Sigmoid colon (tissue), 7 donors: ENCODE measurements at regions of chr10 and their contacts with region 1.

Region 1: DNA sequence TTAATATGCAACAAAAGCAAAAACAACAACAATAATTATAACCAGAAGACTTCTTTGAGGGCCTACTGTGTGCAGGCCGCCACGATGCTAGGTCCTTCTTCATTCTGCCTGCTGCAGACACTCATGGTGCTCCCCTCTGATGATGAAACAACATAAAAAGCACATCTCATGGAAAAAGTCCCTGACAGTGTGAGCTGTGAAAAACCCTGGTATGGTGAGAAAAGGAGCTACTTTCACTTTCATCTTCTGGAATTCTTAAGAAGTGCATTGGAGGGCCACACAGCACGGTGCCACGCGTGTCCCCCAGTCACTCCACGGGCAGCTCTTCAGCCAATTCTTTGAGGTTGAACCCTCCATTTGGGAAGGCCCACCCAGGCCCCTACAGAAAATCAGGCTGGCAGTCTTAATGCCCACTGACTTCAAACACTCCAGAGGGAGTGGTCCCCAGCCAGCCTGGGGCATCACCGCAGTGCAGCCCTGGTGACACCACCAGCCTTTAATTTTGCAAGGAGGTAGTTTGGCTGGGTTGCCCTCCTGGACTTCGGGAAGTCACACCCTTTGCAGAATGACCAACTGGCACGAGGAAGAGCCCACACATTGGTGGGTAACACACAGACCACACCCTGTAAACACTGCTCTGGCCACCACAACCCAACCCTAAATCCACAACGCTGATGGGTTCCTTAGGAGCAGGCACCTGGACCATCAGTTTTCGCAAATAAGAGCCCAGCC is 7.7 kb downstream of the KCNMA1 start:
- DNase-seq: no peak
- H3K4me3 ChIP-seq: no peak overlapping the region
- H3K27ac ChIP-seq: peak overlapping the region; percentile 53 to 93 (median 88)
- H3K4me1 ChIP-seq: peaks cover 0 to 98% (median 87%) of the 10 kb centered on the region in 4 donors
- H3K27me3 ChIP-seq: no peaks in the 10 kb centered on the region
- CTCF ChIP-seq: no peak
- EP300 ChIP-seq: no peak
- POLR2A ChIP-seq: no peak

Region 2: DNA sequence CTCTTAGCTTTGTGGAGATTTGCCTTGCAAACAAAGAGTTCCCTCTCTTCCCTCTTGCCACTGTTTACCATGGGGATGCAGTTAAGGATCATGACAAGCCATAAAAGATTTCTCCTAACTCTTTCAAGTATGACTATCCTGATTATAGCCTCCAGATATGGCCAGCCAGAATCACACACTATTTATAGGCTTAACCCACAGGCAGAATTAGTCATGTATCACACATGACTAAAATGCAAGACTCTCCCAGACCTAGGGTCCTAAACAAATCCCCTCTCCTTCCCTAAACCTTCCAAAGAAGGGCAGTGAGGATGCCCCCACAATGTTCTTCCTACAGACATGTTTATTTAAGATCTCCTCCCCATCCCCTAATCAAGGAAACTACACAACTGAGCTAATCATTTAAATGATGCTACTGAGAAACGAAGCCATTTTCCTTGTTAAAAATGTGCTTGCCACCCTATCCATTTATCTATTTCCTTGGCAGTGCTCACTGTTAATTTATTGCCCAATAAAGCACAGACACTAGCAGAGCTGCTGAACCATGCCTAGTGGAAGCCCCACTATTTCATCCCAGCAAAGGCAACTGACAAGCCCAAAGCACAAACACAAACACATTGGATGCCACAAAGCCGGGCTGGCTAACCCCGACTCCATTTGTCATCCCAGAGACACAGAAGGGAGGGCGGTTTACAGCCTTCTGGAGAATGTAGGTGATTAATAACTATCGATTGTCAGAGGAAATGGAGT is 355.7 kb before region 1 on chr10:
- intact Hi-C with region 1: no loop called
- DNase-seq: peak; percentile 80
- H3K4me3 ChIP-seq: no peak overlapping the region
- H3K27ac ChIP-seq: peak overlapping the region in 3 of 4 donors; percentile 61 to 86 (median 78)
- H3K4me1 ChIP-seq: peaks cover 0 to 62% (median 44%) of the 10 kb centered on the region in 4 donors
- H3K27me3 ChIP-seq: no peaks in the 10 kb centered on the region
- CTCF ChIP-seq: no peak
- EP300 ChIP-seq: peak in 1 of 4 donors; percentile 39
- POLR2A ChIP-seq: no peak

Region 3: GRCh38 chr10:77416311-77417135 is 213.4 kb before region 1 on chr10:
- intact Hi-C with region 1: no loop called
- DNase-seq: no peak
- H3K4me3 ChIP-seq: no peak overlapping the region
- H3K27ac ChIP-seq: peak overlapping the region; percentile 67 to 87 (median 72)
- H3K4me1 ChIP-seq: peaks cover 0 to 100% (median 84%) of the 10 kb centered on the region in 4 donors
- H3K27me3 ChIP-seq: no peaks in the 10 kb centered on the region
- CTCF ChIP-seq: no peak
- EP300 ChIP-seq: no peak
- POLR2A ChIP-seq: no peak

Region 4: DNA sequence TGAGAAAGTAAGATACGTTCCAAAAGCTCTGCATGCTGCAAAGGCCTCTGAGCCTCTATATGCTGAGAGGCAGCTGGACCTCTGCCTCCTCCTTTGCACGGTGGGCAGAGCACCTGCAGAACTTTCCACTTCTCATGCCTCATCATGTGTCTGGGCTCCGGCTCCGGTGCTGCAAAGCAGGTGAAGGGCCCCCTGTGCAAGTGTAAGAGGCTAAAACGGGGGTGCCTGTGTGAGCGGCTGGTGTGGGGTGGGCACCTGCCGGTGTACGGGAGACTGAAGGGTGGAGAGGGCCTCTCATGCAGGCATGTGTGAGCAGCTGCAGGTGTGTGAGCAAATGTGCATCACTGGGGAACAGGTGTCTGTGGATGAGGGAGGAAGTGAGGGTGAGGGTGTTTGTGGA is 113.4 kb before region 1 on chr10:
- intact Hi-C with region 1: loop called (anchors 5 kb)
- DNase-seq: no peak
- H3K4me3 ChIP-seq: no peak overlapping the region
- H3K27ac ChIP-seq: no peak overlapping the region
- H3K4me1 ChIP-seq: peaks cover 0 to 67% (median 63%) of the 10 kb centered on the region in 4 donors
- H3K27me3 ChIP-seq: no peaks in the 10 kb centered on the region
- CTCF ChIP-seq: no peak
- EP300 ChIP-seq: no peak
- POLR2A ChIP-seq: no peak

Region 5: GRCh38 chr10:77592946-77593636 is 36.9 kb before region 1 on chr10:
- intact Hi-C with region 1: loop called (anchors 5 kb)
- DNase-seq: peak; percentile 70
- H3K4me3 ChIP-seq: no peak overlapping the region
- H3K27ac ChIP-seq: peak overlapping the region; percentile 86 to 90 (median 87)
- H3K4me1 ChIP-seq: peaks cover 0 to 83% (median 62%) of the 10 kb centered on the region in 4 donors
- H3K27me3 ChIP-seq: no peaks in the 10 kb centered on the region
- CTCF ChIP-seq: no peak
- EP300 ChIP-seq: no peak
- POLR2A ChIP-seq: no peak

Region 6: GRCh38 chr10:78335691-78336401 is 705.9 kb after region 1 on chr10:
- intact Hi-C with region 1: no loop called
- DNase-seq: peak; percentile 73
- H3K4me3 ChIP-seq: no peak overlapping the region
- H3K27ac ChIP-seq: peak overlapping the region; percentile 40 to 82 (median 72)
- H3K4me1 ChIP-seq: peaks cover 0 to 63% (median 57%) of the 10 kb centered on the region in 4 donors
- H3K27me3 ChIP-seq: no peaks in the 10 kb centered on the region
- CTCF ChIP-seq: no peak
- EP300 ChIP-seq: no peak
- POLR2A ChIP-seq: no peak